ENCODE measurements at regions of chr16 and their contacts with region 1.

Region 1: DNA sequence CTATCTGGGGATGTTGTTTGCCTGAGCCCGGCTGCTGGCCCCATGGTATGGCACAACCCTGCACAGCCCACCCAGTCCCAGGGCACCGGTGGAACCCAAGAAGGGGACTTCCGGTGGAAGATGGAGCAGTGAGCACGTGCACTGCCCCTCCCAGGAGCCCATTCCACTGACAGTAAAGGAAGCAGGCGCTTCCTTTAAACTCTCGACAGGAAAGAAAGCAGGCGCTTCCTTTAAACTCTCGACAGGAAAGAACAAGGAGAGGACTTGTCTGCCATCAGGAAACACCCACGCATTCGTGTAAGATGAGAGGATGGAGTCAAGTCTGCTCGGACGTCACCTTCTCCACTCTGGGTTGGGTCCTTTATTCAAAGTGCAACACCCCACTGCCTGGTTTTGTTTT is 53.7 kb downstream of the IL21R start:
- DNase-seq: no peak
- H3K4me3 Mint-ChIP-seq: no peak overlapping the region
- H3K27ac Mint-ChIP-seq: peak overlapping the region; percentile 74
- H3K4me1 Mint-ChIP-seq: peaks cover 29% of the 10 kb centered on the region
- H3K27me3 Mint-ChIP-seq: no peaks in the 10 kb centered on the region

Region 2: GRCh38 chr16:27179500-27180072 is 276.1 kb before region 1 on chr16:
- intact Hi-C with region 1: loop called (anchors 5 kb)
- DNase-seq: peak; percentile 81
- H3K4me3 Mint-ChIP-seq: no peak overlapping the region
- H3K27ac Mint-ChIP-seq: peak overlapping the region; percentile 40
- H3K4me1 Mint-ChIP-seq: peaks cover 38% of the 10 kb centered on the region
- H3K27me3 Mint-ChIP-seq: no peaks in the 10 kb centered on the region

Region 3: DNA sequence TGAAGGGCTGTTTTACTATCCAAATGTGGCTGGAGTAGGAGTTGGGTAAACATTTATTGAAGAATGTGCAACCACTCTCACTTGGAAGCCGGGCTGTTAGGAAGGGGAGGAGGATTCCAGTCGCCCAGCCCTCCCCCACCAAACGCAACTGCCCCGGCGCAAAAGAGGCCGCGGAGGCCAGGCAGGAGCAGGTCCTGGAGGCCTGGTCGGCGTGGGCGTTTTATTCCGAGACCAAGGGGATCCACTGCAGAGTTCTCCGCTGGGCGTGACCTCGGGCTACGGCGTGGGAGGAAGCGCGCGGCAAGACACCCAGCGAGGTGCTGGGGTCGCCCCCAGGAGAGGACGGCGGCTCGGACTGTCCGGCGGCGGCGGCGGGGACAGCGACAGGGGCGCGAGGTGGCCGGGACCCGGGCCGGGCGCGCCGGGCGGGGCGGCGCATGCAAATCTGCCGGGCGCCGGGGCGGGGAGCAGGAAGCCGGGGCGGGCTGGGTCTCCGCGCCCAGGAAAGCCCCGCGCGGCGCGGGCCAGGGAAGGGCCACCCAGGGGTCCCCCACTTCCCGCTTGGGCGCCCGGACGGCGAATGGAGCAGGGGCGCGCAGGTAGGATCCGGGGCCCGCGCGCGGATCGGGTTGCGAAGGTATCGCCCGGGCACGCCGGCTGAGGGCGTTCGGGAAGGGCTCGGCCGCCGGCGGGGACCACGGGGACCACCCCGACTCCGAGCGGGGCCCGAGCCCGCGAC is 142.1 kb before region 1 on chr16 and contains the start of gene IL4R:
- intact Hi-C with region 1: loop called (anchors 5 kb)
- DNase-seq: peak; percentile 67
- H3K4me3 Mint-ChIP-seq: peak within 1 kb of the TSS; percentile 100
- H3K27ac Mint-ChIP-seq: peak within 1 kb of the TSS; percentile 98
- H3K4me1 Mint-ChIP-seq: peaks cover 43% of the 10 kb centered on the region
- H3K27me3 Mint-ChIP-seq: no peaks in the 10 kb centered on the region
- total RNA-seq, gene IL4R: 434 and 437 TPM in 2 replicates

Region 4: DNA sequence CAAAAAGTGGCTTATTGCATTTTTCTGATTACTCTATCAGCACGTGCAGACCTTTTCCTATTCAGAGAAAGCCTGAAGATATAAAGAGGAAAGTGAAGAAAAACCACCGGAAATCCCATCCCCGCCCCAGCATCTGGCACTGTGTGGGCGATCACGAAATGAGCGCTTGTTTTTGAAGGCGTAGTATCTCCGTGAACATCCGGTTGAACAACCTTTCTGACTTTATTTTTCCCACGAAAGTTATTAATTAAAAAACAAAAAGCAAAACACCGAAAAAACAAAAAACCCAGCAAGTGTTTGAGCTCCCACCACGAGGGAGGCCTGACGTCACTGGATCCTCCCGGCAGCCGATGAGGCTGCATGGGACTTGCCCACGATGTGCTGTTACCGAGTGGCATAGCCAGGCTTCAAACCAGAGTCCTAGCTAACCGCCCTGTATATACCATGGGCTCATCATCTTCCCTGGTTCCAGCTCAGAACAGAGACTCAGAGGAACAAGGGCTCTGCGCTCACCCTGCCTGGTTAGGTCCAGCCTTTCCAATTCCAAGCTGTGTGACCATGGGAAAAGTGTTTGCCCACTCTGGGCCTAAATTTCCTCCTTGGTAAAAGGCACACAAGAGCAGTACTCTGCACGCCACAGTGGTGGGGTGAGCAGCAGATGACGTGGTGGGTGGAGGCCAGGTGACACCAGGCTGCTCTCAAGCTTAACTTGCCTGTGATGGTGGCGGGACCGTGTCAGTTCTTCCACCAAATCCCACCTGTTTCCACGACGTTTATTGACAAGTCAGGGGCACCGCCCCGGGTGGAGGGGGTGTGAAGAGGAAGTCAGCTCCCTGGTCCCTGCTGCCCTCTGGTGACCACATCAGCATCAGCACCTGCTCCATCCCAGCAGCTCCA is 88.0 kb before region 1 on chr16:
- intact Hi-C with region 1: loop called (anchors 2 kb)
- DNase-seq: peak; percentile 81
- H3K4me3 Mint-ChIP-seq: peak overlapping the region; percentile 53
- H3K27ac Mint-ChIP-seq: peak overlapping the region; percentile 99
- H3K4me1 Mint-ChIP-seq: peaks cover 65% of the 10 kb centered on the region
- H3K27me3 Mint-ChIP-seq: no peaks in the 10 kb centered on the region

Region 5: GRCh38 chr16:27390151-27390550 is 65.5 kb before region 1 on chr16:
- intact Hi-C with region 1: no loop called
- DNase-seq: no peak
- H3K4me3 Mint-ChIP-seq: no peak overlapping the region
- H3K27ac Mint-ChIP-seq: no peak overlapping the region
- H3K4me1 Mint-ChIP-seq: peaks cover 36% of the 10 kb centered on the region
- H3K27me3 Mint-ChIP-seq: no peaks in the 10 kb centered on the region

Region 6: DNA sequence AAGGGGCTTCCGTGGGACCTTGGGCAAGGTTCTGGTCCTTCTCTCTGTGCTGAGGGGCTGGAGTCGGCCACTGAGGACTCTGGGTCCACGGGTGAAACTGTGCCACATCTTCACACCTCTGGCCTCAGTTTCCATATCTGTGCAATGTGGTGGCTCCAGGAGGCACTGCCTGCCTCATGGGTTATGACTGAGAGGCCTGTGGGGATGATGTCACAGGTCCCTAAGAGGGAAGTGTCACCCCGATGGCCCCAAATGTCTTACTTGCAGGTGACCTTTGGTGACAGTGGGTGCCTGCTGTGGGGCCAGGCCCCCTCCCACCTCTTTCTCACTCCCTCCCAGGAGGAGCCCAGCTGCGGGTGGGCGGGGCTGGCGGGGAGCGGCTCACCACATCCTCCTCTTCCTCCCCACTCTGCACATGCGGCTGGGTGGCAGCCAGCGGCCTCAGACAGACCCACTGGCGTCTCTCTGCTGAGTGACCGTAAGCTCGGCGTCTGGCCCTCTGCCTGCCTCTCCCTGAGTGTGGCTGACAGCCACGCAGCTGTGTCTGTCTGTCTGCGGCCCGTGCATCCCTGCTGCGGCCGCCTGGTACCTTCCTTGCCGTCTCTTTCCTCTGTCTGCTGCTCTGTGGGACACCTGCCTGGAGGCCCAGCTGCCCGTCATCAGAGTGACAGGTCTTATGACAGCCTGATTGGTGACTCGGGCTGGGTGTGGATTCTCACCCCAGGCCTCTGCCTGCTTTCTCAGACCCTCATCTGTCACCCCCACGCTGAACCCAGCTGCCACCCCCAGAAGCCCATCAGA is 53.7 kb before region 1 on chr16 and contains the start of gene IL21R:
- intact Hi-C with region 1: loop called (anchors 2 kb)
- DNase-seq: peak; percentile 78
- H3K4me3 Mint-ChIP-seq: peak within 1 kb of the TSS; percentile 99
- H3K27ac Mint-ChIP-seq: peak within 1 kb of the TSS; percentile 99
- H3K4me1 Mint-ChIP-seq: peaks cover 45% of the 10 kb centered on the region
- H3K27me3 Mint-ChIP-seq: no peaks in the 10 kb centered on the region
- total RNA-seq, gene IL21R: 84.2 and 84.5 TPM in 2 replicates

Region 7: DNA sequence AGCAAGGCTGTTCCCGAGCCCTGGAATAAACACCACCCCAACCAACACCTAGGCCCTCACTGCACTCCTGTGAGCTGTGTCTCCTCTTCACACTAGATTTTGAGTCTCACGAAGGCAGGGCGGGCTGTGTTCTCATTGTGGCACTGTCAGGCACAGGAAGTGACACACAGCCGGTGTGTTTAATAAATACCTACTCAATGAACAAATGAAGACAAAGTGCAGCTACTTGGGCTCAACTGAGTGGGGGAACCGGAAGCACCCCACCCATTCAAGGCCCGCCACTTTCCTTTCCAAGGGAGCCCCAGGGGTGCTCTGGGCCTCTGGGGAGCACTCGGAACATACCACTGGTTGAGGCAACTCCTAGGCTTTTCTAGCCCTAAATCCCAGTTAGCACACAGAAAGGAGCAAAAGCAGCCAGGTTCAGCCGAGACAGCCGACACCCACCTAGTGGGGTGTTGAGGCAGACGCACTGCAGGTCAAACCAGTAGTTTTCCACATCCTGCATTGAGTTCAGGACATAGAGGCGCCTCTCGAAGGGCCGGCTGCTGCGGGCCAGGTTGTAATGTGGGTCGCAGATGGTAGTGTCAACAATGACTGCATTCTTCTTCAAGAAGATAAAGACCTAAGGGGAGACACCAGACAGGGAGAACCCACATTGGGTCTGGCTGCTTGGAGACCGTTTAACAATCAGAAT is 36.3 kb after region 1 on chr16:
- intact Hi-C with region 1: no loop called
- DNase-seq: no peak
- H3K4me3 Mint-ChIP-seq: no peak overlapping the region
- H3K27ac Mint-ChIP-seq: no peak overlapping the region
- H3K4me1 Mint-ChIP-seq: no peaks in the 10 kb centered on the region
- H3K27me3 Mint-ChIP-seq: no peaks in the 10 kb centered on the region

Region 8: DNA sequence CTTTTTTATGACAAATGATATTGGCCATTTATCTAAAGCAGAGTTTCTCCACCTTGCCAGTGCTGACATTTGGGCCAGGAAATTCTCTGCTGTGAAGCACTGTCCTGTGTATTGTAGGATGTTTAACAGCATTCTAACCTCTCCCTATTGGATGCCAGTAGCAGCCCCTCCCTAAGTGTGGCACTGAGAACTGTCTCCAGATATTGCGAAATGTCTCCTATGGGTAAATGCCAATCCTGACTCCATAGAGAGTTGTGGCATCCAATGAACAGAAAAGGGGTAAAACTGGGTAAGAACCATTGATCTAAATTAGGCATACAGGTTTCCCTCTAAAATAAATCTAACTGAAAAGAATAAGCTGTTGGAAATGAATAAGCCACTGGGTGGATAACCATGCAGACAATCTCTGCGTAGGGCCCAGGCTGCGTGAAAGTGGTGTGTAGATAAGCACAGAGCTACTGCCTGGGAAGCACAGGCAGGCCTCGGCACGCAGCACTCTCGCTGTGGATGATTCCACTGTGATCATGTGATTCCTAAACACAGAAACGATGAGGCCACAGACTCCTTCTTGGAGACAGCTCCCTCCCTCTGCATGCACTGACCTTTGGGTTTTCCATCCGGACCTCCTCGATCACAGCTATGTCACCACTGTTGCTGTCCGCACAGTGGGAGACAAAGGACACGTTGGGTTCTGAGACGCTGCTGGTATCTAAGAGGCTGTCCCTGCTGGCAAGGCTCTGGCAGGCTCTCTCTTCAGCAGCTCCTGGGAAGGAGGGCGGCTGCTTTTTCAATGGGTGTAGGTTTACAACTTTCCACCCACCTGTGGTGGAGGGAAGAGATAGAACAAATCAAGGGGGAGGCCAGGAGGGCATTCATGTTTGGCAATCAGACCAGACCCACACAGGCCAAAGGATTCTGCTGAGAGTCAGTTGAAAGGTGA is 49.9 kb after region 1 on chr16:
- intact Hi-C with region 1: no loop called
- DNase-seq: no peak
- H3K4me3 Mint-ChIP-seq: no peak overlapping the region
- H3K27ac Mint-ChIP-seq: no peak overlapping the region
- H3K4me1 Mint-ChIP-seq: no peaks in the 10 kb centered on the region
- H3K27me3 Mint-ChIP-seq: no peaks in the 10 kb centered on the region

Measured in activated T-helper 2 cell treated with anti-CD3 and anti-CD28 coated beads, Interferon-gamma antibody, Interleukin-2, Interleukin-4, amounts not matched to agents 10 μg/mL and 5 μg/mL and 100 μg/mL, durations not matched to agents 14 hours and 24 hours and 36 hours (primary cell).